ENCODE measurements at regions of chr6 and their contacts with region 1.

Region 1: GRCh38 chr6:165850434-165851019 is 187.5 kb upstream of the PDE10A start:
- DNase-seq: peak; percentile 52
- H3K4me3 ChIP-seq: no peak overlapping the region
- H3K27ac ChIP-seq: no peak overlapping the region
- H3K4me1 ChIP-seq: no peaks in the 10 kb centered on the region
- CTCF ChIP-seq: peak; percentile 98

Region 2: GRCh38 chr6:165439928-165440554 is 410.5 kb before region 1 on chr6:
- CTCF ChIA-PET with region 1: no interaction called
- POLR2A ChIA-PET with region 1: no interaction called
- intact Hi-C with region 1: loop called (anchors 2 kb)
- DNase-seq: peak; percentile 4
- H3K4me3 ChIP-seq: no peak overlapping the region
- H3K27ac ChIP-seq: no peak overlapping the region
- H3K4me1 ChIP-seq: no peaks in the 10 kb centered on the region
- CTCF ChIP-seq: peak; percentile 78

Region 3: DNA sequence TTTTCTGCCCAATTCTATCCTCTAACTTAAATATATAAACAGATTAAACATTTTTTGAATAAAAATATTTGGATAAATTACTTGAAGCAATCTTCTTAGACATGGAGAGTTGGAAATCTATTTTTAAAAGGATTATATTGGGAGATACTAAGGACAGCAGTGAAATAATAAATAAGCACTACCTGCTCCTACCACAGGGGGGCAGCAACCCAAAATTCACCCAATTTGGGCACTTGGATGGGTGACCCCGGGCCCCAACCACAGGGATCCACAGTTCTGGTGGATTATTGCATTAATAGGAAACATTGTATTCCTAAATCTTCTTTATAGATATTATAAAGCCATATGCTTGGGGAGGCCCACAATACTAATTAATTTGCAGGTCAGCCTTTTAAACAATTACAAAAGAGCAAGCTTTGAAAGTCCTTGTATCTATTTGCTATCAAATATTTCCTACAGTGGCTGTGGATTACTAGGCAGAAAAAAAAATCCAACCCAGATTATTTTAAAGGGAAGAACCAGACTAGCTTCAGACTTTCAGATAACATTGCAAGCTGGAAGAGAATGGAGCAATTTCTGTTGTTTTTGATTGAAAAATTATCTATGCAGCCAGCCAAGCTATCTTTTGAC is 121.1 kb before region 1 on chr6:
- CTCF ChIA-PET with region 1: no interaction called
- POLR2A ChIA-PET with region 1: no interaction called
- intact Hi-C with region 1: loop called (anchors 2 kb)
- DNase-seq: peak; percentile 34
- H3K4me3 ChIP-seq: no peak overlapping the region
- H3K27ac ChIP-seq: no peak overlapping the region
- H3K4me1 ChIP-seq: no peaks in the 10 kb centered on the region
- CTCF ChIP-seq: peak; percentile 92

Region 4: GRCh38 chr6:165791876-165792437 is 58.6 kb before region 1 on chr6:
- CTCF ChIA-PET with region 1: no interaction called
- POLR2A ChIA-PET with region 1: no interaction called
- intact Hi-C with region 1: no loop called
- DNase-seq: no peak
- H3K4me3 ChIP-seq: no peak overlapping the region
- H3K27ac ChIP-seq: no peak overlapping the region
- H3K4me1 ChIP-seq: no peaks in the 10 kb centered on the region
- CTCF ChIP-seq: no peak

Region 5: GRCh38 chr6:165884813-165885765 is 34.6 kb after region 1 on chr6:
- CTCF ChIA-PET with region 1: no interaction called
- POLR2A ChIA-PET with region 1: no interaction called
- intact Hi-C with region 1: no loop called
- DNase-seq: peak; percentile 72
- H3K4me3 ChIP-seq: no peak overlapping the region
- H3K27ac ChIP-seq: no peak overlapping the region
- H3K4me1 ChIP-seq: no peaks in the 10 kb centered on the region
- CTCF ChIP-seq: peak; percentile 93